ENCODE measurements at regions of chr12 and their contacts with region 1.

Region 1: DNA sequence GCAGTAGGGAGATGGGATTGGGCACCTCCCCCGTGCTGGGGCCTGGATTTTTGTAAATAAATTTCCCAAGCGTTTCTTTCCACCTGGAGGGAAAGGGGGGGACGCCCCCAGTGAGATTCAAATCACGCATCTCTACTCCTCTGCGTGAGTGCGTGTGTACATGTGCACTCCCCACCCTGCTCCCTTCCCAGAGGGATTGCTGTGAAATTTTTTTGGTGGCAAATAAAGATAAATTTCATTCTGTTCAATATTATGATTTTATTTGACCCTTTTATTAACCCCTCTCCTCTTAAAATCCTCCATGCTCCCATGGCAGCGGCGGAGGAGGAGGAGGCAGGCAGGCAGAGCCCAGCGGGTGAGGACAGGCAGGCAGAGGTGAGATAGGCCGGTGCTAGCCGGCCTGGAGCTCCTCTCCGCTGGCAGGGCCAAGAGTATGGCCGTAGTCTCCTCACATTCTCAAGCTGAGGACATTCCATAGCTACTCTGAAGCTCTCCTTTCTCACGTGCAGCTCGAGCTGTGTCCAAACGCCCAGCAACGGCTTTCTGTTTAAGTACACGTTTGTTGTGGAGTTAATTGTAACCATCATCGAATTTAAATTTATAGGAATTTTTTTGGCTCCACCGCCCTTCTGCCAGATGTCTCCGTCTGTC is 1.5 kb upstream of the HOTAIR start:
- DNase-seq: peak in 1 of 2 donors; percentile 57
- ATAC-seq: peak in 2 of 4 donors; percentile 29 to 35
- H3K4me3 ChIP-seq: peak overlapping the region; percentile 69
- H3K27ac ChIP-seq: peak overlapping the region; percentile 71
- H3K4me1 ChIP-seq: peaks cover 5% of the 10 kb centered on the region
- H3K27me3 ChIP-seq: peaks cover 0 to 58% (median 30%) of the 10 kb centered on the region in 3 donors
- CTCF ChIP-seq: no peak

Region 2: GRCh38 chr12:54021432-54022013 is 45.2 kb after region 1 on chr12:
- intact Hi-C with region 1: loop called in 1 of 2 experiments (anchors 1 kb)
- DNase-seq: peak; percentile 57 to 85
- ATAC-seq: peak; percentile 13 to 45 (median 29)
- H3K4me3 ChIP-seq: peak overlapping the region; percentile 77
- H3K27ac ChIP-seq: peak overlapping the region; percentile 99
- H3K4me1 ChIP-seq: peaks cover 51% of the 10 kb centered on the region
- H3K27me3 ChIP-seq: no peaks in the 10 kb centered on the region
- CTCF ChIP-seq: peak; percentile 43

Measured in psoas muscle (tissue), 8 donors.